Sigmoid colon (tissue), 7 donors: ENCODE measurements at regions of chr2 and their contacts with region 1.

Region 1: DNA sequence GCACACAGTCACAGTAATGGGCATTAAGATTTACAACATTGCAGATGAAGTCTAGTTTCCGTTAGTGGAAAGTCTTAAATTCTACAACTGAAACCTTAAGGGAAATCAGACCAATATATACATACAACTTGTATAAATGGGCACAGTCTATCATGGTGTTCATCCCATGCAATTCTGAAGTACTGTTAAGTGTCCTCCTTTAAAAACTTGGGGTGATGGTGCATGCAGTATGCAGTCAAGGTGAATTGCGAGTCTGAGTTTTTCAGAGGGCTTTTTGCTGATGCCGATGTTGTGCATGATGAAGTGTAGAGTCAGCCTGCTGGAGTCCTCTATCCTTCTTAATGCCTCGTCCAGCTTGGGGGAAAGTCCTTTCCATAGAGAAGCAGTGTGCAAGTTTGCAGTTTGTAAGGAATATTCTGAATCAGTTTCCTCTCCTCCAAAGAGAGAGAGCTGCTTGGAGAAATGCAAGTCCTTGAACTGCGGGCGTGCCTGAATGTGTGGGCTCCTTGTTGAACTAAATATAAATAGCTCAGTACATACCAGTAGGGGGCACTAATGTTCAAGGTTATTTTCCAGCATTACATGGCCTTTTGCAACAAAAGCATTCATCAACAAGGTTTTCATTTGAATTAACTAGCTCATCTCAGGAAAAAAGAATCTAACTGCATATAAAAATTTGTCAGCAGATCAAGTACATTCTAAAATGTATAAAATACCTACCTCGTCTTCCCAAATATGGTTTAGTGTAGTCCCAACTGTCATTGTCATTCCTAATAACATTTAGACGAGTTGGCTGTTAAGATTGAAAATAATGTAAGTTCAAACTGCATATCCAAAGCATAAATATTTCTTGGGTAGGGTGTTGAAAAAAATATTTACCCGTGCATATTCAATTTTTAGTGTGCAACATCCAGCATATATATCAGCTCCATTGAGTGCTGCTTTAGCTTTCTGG is 21.3 kb downstream of the HNRNPLL start:
- DNase-seq: no peak
- H3K4me3 ChIP-seq: no peak overlapping the region
- H3K27ac ChIP-seq: peak overlapping the region in 2 of 4 donors; percentile 17 to 27
- H3K4me1 ChIP-seq: peaks cover 0 to 39% (median 11%) of the 10 kb centered on the region in 4 donors
- H3K27me3 ChIP-seq: no peaks in the 10 kb centered on the region
- CTCF ChIP-seq: peak; percentile 31 to 63 (median 60)
- EP300 ChIP-seq: no peak
- POLR2A ChIP-seq: no peak

Region 2: DNA sequence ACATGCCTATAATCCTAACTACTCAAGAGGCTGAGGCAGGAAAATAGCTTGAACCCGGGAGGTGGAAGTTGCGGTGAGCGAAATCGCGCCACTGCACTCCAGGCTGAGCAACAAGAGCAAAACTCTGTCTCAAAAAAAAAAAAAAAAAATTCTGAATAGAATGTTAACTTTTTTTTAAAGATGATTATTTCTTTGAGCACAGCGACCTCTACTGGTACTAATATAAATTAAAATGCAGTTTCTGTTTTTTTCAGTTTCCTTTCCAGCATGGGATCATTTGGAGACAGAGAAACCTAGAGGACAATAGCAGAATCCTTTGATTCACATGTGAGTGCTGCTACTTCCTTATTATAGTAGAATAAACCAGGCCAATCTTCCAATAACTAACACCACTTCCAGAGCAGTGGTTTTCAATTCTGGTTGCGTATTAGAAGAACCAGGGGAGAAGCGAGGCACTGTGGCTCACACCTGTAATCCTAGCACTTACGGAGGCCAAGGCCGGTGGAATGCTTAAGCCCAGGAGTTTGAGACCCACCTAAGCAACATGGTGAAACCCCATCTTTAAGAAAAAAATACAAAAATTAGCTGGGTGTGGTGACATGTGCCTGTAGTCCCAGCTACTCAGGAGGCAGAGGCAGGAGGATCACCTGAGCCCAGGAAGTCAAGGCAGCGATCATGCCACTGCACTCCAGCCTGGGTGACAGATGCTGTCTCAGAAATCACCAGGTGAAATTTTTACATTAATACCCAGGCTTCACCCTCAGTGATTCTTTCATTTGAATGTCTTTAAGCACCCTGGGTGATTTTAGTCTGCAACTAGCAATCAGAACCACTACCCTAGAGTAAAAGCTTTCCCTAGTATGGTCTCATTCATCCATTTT is 159.6 kb after region 1 on chr2:
- intact Hi-C with region 1: loop called (anchors 2 kb)
- DNase-seq: no peak
- H3K4me3 ChIP-seq: no peak overlapping the region
- H3K27ac ChIP-seq: peak overlapping the region; percentile 72 to 85 (median 81)
- H3K4me1 ChIP-seq: peaks cover 0 to 70% (median 49%) of the 10 kb centered on the region in 4 donors
- H3K27me3 ChIP-seq: no peaks in the 10 kb centered on the region
- CTCF ChIP-seq: peak; percentile 48 to 78 (median 58)
- EP300 ChIP-seq: no peak
- POLR2A ChIP-seq: no peak